Breast epithelium (tissue), 4 donors: ENCODE measurements at regions of chr4 and their contacts with region 1.

Region 1: DNA sequence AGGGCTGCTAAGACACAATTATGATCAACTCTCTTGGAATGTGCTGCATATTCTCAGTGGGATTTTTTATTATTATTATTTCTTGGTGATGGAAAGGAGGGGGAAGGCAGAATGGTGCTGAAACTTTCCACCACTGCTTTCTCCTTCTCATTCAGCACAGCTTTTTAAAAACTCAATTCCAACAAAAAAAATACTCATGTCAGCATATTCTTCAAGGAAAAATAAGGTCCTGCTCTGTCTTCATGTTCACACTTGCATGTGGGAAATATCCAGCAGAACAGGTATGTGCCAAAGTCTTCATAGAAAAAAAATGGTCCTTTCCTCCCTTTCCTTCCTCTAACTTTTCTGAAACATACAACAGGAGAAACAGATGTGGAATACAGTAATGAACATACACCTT is 144.0 kb upstream of the ADAMTS3 start:
- DNase-seq: no peak
- H3K4me3 ChIP-seq: no peak overlapping the region
- H3K27ac ChIP-seq: no peak overlapping the region
- H3K4me1 ChIP-seq: no peaks in the 10 kb centered on the region
- H3K27me3 ChIP-seq: no peaks in the 10 kb centered on the region
- CTCF ChIP-seq: no peak
- POLR2A ChIP-seq: no peak

Region 2: DNA sequence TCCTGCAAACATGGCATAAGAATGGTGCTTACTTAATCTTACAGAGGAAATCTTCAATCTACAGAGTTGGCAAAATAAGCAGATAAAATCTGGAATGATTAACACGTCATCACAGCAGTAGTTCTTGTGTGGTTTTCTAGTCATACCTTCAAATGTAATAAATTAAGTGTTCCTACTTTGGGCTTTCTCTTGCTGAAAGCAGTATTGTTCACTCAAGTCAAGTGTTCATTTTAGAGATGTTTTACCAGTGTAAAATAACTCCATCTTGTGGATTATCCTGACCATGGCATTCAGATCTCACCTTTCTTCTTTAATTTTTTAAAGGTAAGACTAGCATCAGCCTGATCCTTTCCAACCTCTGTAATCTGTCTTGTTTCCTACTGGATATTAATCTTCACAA is 216.9 kb before region 1 on chr4:
- intact Hi-C with region 1: loop called (anchors 5 kb)
- DNase-seq: no peak
- H3K4me3 ChIP-seq: no peak overlapping the region
- H3K27ac ChIP-seq: no peak overlapping the region
- H3K4me1 ChIP-seq: no peaks in the 10 kb centered on the region
- H3K27me3 ChIP-seq: no peaks in the 10 kb centered on the region
- CTCF ChIP-seq: no peak
- POLR2A ChIP-seq: no peak

Region 3: DNA sequence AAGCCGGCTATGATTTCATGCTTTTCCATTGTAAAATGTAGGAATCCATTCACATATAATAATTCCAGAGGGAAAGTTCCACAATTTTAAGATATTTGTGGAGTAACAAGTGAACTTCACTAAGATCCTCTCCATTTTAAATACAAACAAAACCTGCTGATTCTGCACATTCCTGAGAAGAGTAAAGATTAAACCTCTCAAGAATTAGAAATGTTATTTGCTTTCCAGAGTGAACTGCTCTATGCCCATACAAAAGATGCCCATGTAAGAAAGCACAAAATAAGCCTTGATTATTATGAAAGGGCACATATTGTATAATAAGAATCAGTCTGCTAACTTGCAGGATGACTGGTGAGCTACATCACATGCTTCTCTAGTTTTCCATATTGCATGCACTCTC is 115.0 kb after region 1 on chr4:
- intact Hi-C with region 1: no loop called
- DNase-seq: no peak
- H3K4me3 ChIP-seq: no peak overlapping the region
- H3K27ac ChIP-seq: no peak overlapping the region
- H3K4me1 ChIP-seq: no peaks in the 10 kb centered on the region
- H3K27me3 ChIP-seq: no peaks in the 10 kb centered on the region
- CTCF ChIP-seq: no peak
- POLR2A ChIP-seq: no peak

Region 4: GRCh38 chr4:74410272-74410671 is 1697.3 kb after region 1 on chr4:
- intact Hi-C with region 1: no loop called
- DNase-seq: no peak
- H3K4me3 ChIP-seq: no peak overlapping the region
- H3K27ac ChIP-seq: no peak overlapping the region
- H3K4me1 ChIP-seq: no peaks in the 10 kb centered on the region
- H3K27me3 ChIP-seq: no peaks in the 10 kb centered on the region
- CTCF ChIP-seq: no peak
- POLR2A ChIP-seq: no peak